ENCODE measurements at regions of chr20 and their contacts with region 1.

Region 1: DNA sequence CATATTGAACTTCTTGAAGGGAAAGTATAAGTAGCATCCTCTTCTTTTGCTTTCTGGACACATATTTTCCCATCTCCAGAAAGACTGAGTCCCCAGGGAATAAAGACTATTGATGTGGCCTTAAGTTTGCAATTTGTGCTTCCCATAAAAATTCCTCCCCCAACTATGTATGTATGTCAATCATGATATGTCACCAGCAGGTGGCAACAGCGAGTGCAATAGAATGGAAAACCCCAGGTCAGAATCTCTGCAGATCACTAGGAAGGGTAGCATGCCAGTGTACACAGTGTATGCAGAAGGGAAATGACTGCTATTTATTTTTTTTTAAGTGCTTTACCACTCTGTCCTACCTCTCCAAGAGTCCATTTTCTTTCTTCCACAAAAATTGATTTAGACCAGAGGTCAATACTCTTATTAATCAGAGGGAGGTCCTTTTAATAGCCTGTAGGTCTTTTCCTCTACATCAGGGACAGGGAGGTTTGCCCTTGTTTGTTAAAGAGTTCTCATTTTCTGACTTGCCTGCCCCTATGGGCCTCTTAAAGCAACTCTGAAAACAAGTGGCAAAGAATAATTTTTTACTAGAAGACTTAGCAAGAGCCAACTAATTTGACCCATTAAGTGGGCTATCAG is 61.4 kb downstream of the BMP2 start:
- DNase-seq: peak in 1 of 2 experiments; percentile 69
- H3K4me3 ChIP-seq: no peak overlapping the region
- H3K27ac ChIP-seq: no peak overlapping the region
- H3K4me1 ChIP-seq: no peaks in the 10 kb centered on the region
- H3K27me3 ChIP-seq: no peaks in the 10 kb centered on the region
- CTCF ChIP-seq: peak in 2 of 3 experiments; percentile 70 to 79; a peak in 3 of 4 replicates
- EP300 ChIP-seq: no peak
- POLR2A ChIP-seq: no peak
- RAD21 ChIP-seq: peak; percentile 71 to 81

Region 2: GRCh38 chr20:6841128-6841527 is 12.2 kb after region 1 on chr20:
- CTCF ChIA-PET with region 1: interaction called, 16 read pairs
- POLR2A ChIA-PET with region 1: no interaction called
- DNase-seq: no peak
- H3K4me3 ChIP-seq: no peak overlapping the region
- H3K27ac ChIP-seq: no peak overlapping the region
- H3K4me1 ChIP-seq: peaks cover 0 to 7% (median 1%) of the 10 kb centered on the region in 4 experiments; a peak in 1 of 7 replicates
- H3K27me3 ChIP-seq: no peaks in the 10 kb centered on the region; a peak in 1 of 7 replicates
- CTCF ChIP-seq: no peak
- EP300 ChIP-seq: no peak
- POLR2A ChIP-seq: no peak
- RAD21 ChIP-seq: no peak

Region 3: GRCh38 chr20:6940046-6940445 is 111.1 kb after region 1 on chr20:
- CTCF ChIA-PET with region 1: interaction called, 16 read pairs
- POLR2A ChIA-PET with region 1: no interaction called
- DNase-seq: peak; percentile 10 to 66
- H3K4me3 ChIP-seq: no peak overlapping the region
- H3K27ac ChIP-seq: no peak overlapping the region
- H3K4me1 ChIP-seq: no peaks in the 10 kb centered on the region
- H3K27me3 ChIP-seq: no peaks in the 10 kb centered on the region
- CTCF ChIP-seq: peak; percentile 38 to 99 (median 93)
- EP300 ChIP-seq: no peak
- POLR2A ChIP-seq: no peak
- RAD21 ChIP-seq: peak; percentile 84 to 90

Region 4: GRCh38 chr20:7094438-7094997 is 265.6 kb after region 1 on chr20:
- CTCF ChIA-PET with region 1: interaction called, 13 read pairs
- POLR2A ChIA-PET with region 1: no interaction called
- DNase-seq: peak in 1 of 2 experiments; percentile 63
- H3K4me3 ChIP-seq: no peak overlapping the region
- H3K27ac ChIP-seq: no peak overlapping the region
- H3K4me1 ChIP-seq: no peaks in the 10 kb centered on the region
- H3K27me3 ChIP-seq: no peaks in the 10 kb centered on the region
- CTCF ChIP-seq: peak; percentile 76 to 81 (median 80)
- EP300 ChIP-seq: no peak
- POLR2A ChIP-seq: no peak
- RAD21 ChIP-seq: peak; percentile 87

Region 5: GRCh38 chr20:7637184-7637583 is 808.3 kb after region 1 on chr20:
- CTCF ChIA-PET with region 1: no interaction called
- POLR2A ChIA-PET with region 1: no interaction called
- DNase-seq: no peak
- H3K4me3 ChIP-seq: no peak overlapping the region
- H3K27ac ChIP-seq: no peak overlapping the region
- H3K4me1 ChIP-seq: no peaks in the 10 kb centered on the region
- H3K27me3 ChIP-seq: no peaks in the 10 kb centered on the region
- CTCF ChIP-seq: no peak
- EP300 ChIP-seq: no peak
- POLR2A ChIP-seq: no peak
- RAD21 ChIP-seq: no peak

Measured in H1 (cell line).